ENCODE measurements at regions of chr4 and their contacts with region 1.

Region 1: DNA sequence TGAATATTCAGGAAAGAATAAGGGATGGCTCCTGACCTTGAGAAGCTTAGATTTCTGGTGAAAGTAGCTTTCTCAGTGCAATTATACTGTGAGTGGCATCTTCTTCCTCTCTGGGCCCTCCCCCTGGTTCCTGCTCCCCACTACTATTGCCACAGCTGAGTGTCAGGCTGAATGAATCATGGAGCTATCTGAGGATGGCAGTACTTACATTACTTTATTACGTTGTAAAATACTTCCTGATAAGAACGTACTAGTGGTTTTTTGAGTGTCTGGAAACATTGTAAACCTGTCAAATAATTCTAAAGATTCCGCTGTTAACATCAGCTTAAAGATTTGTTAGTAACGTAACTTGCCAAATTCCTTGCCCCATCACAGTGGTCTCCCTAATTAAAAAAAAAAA is 36.2 kb downstream of the ARHGAP10 start:
- DNase-seq: no peak
- CTCF ChIP-seq: no peak

Region 2: GRCh38 chr4:147755561-147756295 is 12.4 kb before region 1 on chr4:
- CTCF ChIA-PET with region 1: interaction called, 12 read pairs
- POLR2A ChIA-PET with region 1: interaction called, 3 read pairs
- DNase-seq: no peak
- CTCF ChIP-seq: no peak

Region 3: GRCh38 chr4:147799986-147800555 is 32.0 kb after region 1 on chr4:
- CTCF ChIA-PET with region 1: no interaction called
- POLR2A ChIA-PET with region 1: no interaction called
- DNase-seq: peak; percentile 74
- CTCF ChIP-seq: no peak

Measured in GM10248 (cell line).